Endothelial cell of umbilical vein (primary cell): ENCODE measurements at regions of chr4 and their contacts with region 1.

Region 1: DNA sequence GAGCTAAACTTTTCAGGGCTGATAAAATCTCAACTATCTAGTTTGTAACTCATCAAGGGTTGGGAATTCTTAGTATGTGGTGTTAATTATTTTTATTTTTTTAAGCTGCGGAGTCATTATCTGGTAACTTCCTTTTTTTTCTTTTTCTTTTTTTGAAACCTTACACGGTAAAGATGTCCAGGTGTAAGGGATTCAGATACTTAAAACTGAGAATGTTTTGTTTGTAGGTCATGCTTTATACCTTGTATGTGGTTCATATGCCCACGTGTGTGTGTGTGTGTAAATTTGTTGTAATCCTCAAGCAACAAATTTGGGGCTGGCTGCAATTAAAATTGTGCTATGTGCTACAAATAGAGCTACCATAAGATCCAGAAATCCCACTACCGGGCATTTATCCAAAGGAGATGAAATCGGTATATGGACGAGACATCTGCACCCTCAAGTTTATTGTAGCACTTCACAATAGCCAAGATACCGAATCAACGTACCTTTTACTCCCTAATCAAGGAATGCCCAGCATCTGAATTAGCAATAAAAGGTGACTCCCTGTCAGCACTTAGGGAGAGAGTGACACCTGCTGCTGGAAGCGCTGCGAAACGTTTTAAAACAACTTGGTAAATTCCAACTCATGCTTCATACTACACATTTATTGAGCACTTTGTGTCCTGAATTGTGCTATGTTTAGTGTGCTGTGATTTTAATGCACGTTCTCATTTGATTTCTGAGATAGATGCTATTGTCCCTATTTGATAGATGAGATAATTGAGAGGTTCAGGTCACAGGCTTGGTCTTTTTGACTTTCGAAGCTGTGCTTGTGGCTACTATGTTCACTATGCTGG is 16.1 kb downstream of the MSMO1 start:
- DNase-seq: peak; percentile 53
- H3K4me3 ChIP-seq: no peak overlapping the region
- H3K27ac ChIP-seq: no peak overlapping the region
- H3K4me1 ChIP-seq: no peaks in the 10 kb centered on the region
- H3K27me3 ChIP-seq: peaks cover 0 to under 1% of the 10 kb centered on the region in 2 experiments
- CTCF ChIP-seq: peak in 1 of 2 donors; percentile 20
- POLR2A ChIP-seq: no peak

Region 2: DNA sequence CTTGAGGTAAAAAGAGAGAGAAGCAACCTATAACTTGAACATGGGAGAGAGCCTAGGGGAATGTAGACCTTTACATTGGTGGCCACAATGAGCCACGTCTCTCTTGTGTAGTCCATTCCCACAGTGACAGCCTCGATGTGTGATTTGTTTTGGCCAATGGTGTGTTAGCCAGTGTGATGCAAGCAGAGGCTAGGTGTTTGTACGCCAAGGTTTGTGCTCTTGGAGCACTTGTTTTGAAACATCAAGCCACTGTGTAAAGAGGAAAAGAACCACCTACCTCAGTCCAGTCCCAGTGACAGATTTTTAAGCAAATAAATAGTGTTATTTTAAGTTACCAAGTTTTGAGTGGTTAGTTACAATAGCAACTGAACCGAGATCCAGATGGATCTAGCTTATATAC is 207.0 kb before region 1 on chr4:
- CTCF ChIA-PET with region 1: interaction called, 347 read pairs
- POLR2A ChIA-PET with region 1: interaction called, 3 read pairs
- dilution Hi-C with region 1: no loop called
- intact Hi-C with region 1: loop called (anchors 1 kb)
- DNase-seq: no peak
- H3K4me3 ChIP-seq: no peak overlapping the region
- H3K27ac ChIP-seq: no peak overlapping the region
- H3K4me1 ChIP-seq: no peaks in the 10 kb centered on the region
- H3K27me3 ChIP-seq: no peaks in the 10 kb centered on the region
- CTCF ChIP-seq: no peak
- POLR2A ChIP-seq: no peak

Region 3: DNA sequence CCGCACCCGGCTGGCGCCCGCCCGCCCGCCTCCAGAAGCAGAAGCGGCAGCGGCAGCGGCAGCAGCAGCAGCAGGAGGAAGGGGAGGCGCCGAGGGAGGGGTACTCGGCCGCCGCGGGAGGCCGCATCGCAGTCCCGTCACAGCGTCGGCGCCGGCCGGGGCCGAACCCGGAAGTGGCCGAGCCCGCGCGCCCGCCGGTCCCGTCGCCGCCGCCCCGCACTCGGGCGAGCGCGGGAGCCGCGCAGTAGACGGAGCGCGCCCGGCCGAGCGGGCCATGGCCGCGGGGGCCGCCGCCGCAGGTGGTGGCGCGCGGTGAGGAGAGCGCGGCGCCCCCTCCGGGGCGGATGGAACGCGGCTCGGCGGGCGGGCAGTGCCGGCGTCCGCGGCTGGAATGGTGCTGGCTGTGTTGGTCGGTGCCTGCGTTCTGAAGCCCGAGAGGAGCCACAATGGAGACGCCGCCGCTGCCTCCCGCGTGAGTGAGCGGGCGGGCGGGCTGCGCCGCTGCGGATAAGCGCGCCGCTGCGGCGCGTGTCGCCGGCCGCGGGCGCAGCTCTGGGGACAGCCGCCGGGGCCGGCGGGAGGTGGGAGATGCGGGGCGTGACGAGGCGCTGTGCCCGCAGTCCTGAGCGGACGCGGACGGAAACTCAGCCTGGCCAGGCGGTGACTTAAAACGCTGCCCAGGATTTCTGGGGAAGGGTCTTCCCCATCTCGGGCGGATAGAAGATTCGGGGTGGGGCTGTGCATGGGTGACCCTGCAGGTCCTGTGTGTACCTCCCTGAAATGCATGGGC is 135.9 kb before region 1 on chr4 and contains the start of gene KLHL2:
- CTCF ChIA-PET with region 1: no interaction called
- POLR2A ChIA-PET with region 1: no interaction called
- dilution Hi-C with region 1: no loop called
- intact Hi-C with region 1: no loop called
- DNase-seq: peak; percentile 80
- H3K4me3 ChIP-seq: peak within 1 kb of the TSS; percentile 95 to 98 (median 97)
- H3K27ac ChIP-seq: peak within 1 kb of the TSS; percentile 58
- H3K4me1 ChIP-seq: peaks cover 22% of the 10 kb centered on the region
- H3K27me3 ChIP-seq: no peaks in the 10 kb centered on the region
- CTCF ChIP-seq: no peak
- POLR2A ChIP-seq: peak; percentile 73
- total RNA-seq, gene KLHL2: 22.1 and 22.9 TPM in 2 replicates

Region 4: GRCh38 chr4:165398570-165398969 is 55.0 kb after region 1 on chr4:
- CTCF ChIA-PET with region 1: no interaction called
- POLR2A ChIA-PET with region 1: no interaction called
- dilution Hi-C with region 1: no loop called
- intact Hi-C with region 1: no loop called
- DNase-seq: peak; percentile 35
- H3K4me3 ChIP-seq: no peak overlapping the region
- H3K27ac ChIP-seq: no peak overlapping the region
- H3K4me1 ChIP-seq: no peaks in the 10 kb centered on the region
- H3K27me3 ChIP-seq: no peaks in the 10 kb centered on the region
- CTCF ChIP-seq: no peak
- POLR2A ChIP-seq: no peak